ENCODE measurements at regions of chrX and their contacts with region 1.

Region 1: GRCh38 chrX:134520860-134521390 is 61.0 kb downstream of the HPRT1 start:
- DNase-seq: no peak
- ATAC-seq: peak; percentile 78 to 86 (median 82)
- H3K4me3 ChIP-seq: no peak overlapping the region
- H3K27ac ChIP-seq: no peak overlapping the region
- H3K4me1 ChIP-seq: no peaks in the 10 kb centered on the region
- H3K27me3 ChIP-seq: no peaks in the 10 kb centered on the region
- CTCF ChIP-seq: peak; percentile 51

Region 2: GRCh38 chrX:134161162-134161561 is 359.8 kb before region 1 on chrX:
- intact Hi-C with region 1: no loop called
- DNase-seq: no peak
- ATAC-seq: no peak
- H3K4me3 ChIP-seq: no peak overlapping the region
- H3K27ac ChIP-seq: no peak overlapping the region
- H3K4me1 ChIP-seq: no peaks in the 10 kb centered on the region
- H3K27me3 ChIP-seq: peaks cover 0 to 10% (median 0%) of the 10 kb centered on the region in 3 donors
- CTCF ChIP-seq: no peak

Region 3: DNA sequence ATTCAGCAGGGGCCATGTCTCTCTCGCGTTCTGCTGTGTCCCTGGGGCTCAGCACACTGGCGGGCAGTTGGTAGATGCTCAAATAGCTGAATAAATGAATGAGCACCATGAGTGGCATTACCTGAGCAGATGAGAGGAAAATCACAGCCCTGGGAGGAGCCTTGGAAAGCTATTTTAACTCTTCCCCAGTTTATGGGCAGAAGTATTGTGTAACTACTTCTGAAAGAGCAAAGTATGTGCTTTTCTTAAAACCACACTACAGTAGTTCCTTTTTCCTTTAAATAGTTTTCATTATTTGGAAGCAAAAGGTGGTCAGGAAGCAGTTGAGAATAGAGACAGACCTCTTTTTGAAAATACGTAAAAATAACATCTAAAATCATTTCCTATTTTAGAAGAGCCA is 140.4 kb after region 1 on chrX:
- intact Hi-C with region 1: no loop called
- DNase-seq: no peak
- ATAC-seq: no peak
- H3K4me3 ChIP-seq: no peak overlapping the region
- H3K27ac ChIP-seq: no peak overlapping the region
- H3K4me1 ChIP-seq: no peaks in the 10 kb centered on the region
- H3K27me3 ChIP-seq: peaks cover 0 to 6% (median 0%) of the 10 kb centered on the region in 3 donors
- CTCF ChIP-seq: no peak

Region 4: DNA sequence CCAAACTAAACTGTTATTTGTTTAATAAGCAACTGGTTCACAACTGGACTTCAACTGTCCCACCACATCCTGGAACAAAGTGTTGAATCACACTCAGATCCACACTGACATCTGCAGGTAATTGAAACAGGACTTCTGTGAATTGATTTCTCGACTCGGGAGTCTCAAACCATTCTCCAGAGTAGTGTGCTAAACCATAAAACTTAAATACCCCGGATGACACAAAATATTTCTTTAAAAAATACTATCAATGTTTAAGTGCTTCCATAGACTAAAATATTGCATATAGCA is 232.7 kb after region 1 on chrX:
- intact Hi-C with region 1: loop called (anchors 2 to 5 kb)
- DNase-seq: no peak
- ATAC-seq: peak; percentile 62 to 79 (median 66)
- H3K4me3 ChIP-seq: no peak overlapping the region
- H3K27ac ChIP-seq: no peak overlapping the region
- H3K4me1 ChIP-seq: no peaks in the 10 kb centered on the region
- H3K27me3 ChIP-seq: no peaks in the 10 kb centered on the region
- CTCF ChIP-seq: peak; percentile 40

Measured in psoas muscle (tissue), 8 donors.